ENCODE measurements at regions of chr4 and their contacts with region 1.

Region 1: GRCh38 chr4:48499551-48500066 is 9.6 kb downstream of the ZAR1 start:
- DNase-seq: no peak
- ATAC-seq: no peak
- H3K4me3 ChIP-seq: no peak overlapping the region
- H3K27ac ChIP-seq: no peak overlapping the region
- H3K4me1 ChIP-seq: no peaks in the 10 kb centered on the region
- H3K27me3 ChIP-seq: no peaks in the 10 kb centered on the region
- CTCF ChIP-seq: no peak
- POLR2A ChIP-seq: no peak
- RAD21 ChIP-seq: no peak

Region 2: DNA sequence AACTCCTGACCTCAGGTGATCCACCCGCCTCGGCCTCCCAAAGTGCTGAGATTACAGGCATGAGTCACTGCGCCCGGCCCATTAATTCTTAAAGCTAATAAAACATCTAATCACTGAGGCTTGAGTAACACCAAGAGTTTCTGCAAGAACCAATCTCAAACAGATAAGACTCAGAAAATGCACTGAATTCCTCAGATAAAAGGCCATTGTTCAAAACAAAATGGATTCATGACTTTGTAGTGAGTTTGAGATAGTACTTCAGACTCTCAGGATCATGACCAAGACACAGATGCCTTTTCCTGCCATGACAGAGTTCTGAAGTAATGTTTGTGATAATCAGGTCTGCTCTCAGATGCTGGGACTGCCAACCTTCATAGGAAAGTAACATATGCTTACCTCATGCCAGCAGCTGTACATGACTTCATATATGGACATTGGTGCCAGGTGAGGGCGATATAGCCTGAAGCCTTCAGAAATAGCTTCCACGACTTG is 428.4 kb before region 1 on chr4:
- CTCF ChIA-PET with region 1: no interaction called
- POLR2A ChIA-PET with region 1: no interaction called
- dilution Hi-C with region 1: no loop called
- in situ Hi-C with region 1: no loop called
- intact Hi-C with region 1: no loop called
- DNase-seq: no peak
- ATAC-seq: no peak
- H3K4me3 ChIP-seq: no peak overlapping the region
- H3K27ac ChIP-seq: no peak overlapping the region
- H3K4me1 ChIP-seq: no peaks in the 10 kb centered on the region
- H3K27me3 ChIP-seq: no peaks in the 10 kb centered on the region; the same call in 1 of the 2 replicates
- CTCF ChIP-seq: no peak
- POLR2A ChIP-seq: no peak
- RAD21 ChIP-seq: no peak

Region 3: GRCh38 chr4:48223633-48224295 is 275.8 kb before region 1 on chr4:
- CTCF ChIA-PET with region 1: no interaction called
- POLR2A ChIA-PET with region 1: no interaction called
- dilution Hi-C with region 1: no loop called
- in situ Hi-C with region 1: no loop called
- intact Hi-C with region 1: no loop called
- DNase-seq: peak; percentile 11
- ATAC-seq: no peak
- H3K4me3 ChIP-seq: no peak overlapping the region
- H3K27ac ChIP-seq: no peak overlapping the region
- H3K4me1 ChIP-seq: no peaks in the 10 kb centered on the region
- H3K27me3 ChIP-seq: no peaks in the 10 kb centered on the region
- CTCF ChIP-seq: no peak
- POLR2A ChIP-seq: no peak
- RAD21 ChIP-seq: no peak

Region 4: GRCh38 chr4:48450740-48451139 is 48.9 kb before region 1 on chr4:
- CTCF ChIA-PET with region 1: no interaction called
- POLR2A ChIA-PET with region 1: no interaction called
- dilution Hi-C with region 1: no loop called
- in situ Hi-C with region 1: no loop called
- intact Hi-C with region 1: loop called (anchors 10 kb)
- DNase-seq: no peak
- ATAC-seq: no peak
- H3K4me3 ChIP-seq: no peak overlapping the region
- H3K27ac ChIP-seq: no peak overlapping the region
- H3K4me1 ChIP-seq: no peaks in the 10 kb centered on the region
- H3K27me3 ChIP-seq: peaks cover 5% of the 10 kb centered on the region
- CTCF ChIP-seq: no peak
- POLR2A ChIP-seq: no peak
- RAD21 ChIP-seq: no peak

Region 5: DNA sequence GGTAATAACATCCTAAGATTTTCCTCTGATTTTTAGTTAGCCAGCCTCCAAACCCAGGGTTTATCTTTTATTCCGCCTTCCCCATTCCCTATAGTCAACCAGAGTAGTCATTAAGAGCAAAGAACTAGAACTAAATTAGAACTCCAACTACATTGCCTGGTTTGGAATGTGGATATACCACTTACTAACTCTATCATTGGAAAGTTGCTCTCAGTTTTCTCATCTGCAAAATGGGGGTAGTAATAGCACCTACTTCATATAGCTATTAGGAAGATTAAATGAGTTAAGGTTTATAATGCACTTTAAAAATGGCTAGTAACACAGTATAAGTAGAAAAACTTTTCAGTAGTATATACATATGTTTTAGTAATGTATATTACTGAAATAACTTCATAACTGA is 54.1 kb after region 1 on chr4:
- CTCF ChIA-PET with region 1: no interaction called
- POLR2A ChIA-PET with region 1: no interaction called
- dilution Hi-C with region 1: no loop called
- in situ Hi-C with region 1: no loop called
- intact Hi-C with region 1: no loop called
- DNase-seq: no peak
- ATAC-seq: no peak
- H3K4me3 ChIP-seq: no peak overlapping the region
- H3K27ac ChIP-seq: no peak overlapping the region
- H3K4me1 ChIP-seq: no peaks in the 10 kb centered on the region
- H3K27me3 ChIP-seq: no peaks in the 10 kb centered on the region
- CTCF ChIP-seq: no peak
- POLR2A ChIP-seq: no peak
- RAD21 ChIP-seq: no peak

Region 6: DNA sequence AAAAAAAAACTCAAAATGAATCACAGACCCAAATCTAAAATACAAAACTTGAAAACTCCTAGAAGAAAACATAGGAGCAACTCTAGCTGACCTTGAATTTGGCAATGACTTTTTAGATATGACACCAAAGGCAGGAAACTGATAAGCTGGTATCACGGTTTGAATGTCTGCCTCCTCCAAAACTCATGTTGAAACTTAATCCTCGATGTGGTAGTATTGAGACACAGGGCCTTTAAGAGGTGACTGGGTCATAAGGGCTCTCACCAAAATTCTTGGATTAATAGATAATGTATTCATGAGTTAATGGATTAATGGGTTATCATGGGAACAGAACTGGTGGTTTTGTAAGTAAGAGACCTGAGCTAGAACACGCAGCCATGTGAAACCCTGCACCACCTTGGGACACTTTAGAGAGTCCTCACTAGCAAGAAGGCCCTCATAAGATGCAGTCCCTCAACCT is 240.0 kb after region 1 on chr4:
- CTCF ChIA-PET with region 1: no interaction called
- POLR2A ChIA-PET with region 1: no interaction called
- dilution Hi-C with region 1: no loop called
- in situ Hi-C with region 1: no loop called
- intact Hi-C with region 1: no loop called
- DNase-seq: no peak
- ATAC-seq: no peak
- H3K4me3 ChIP-seq: no peak overlapping the region
- H3K27ac ChIP-seq: no peak overlapping the region
- H3K4me1 ChIP-seq: 0 out of 2 replicates have a peak, but pooled peaks cover 1% of the 10 kb centered on the region
- H3K27me3 ChIP-seq: no peaks in the 10 kb centered on the region
- CTCF ChIP-seq: no peak
- POLR2A ChIP-seq: no peak
- RAD21 ChIP-seq: no peak

Measured in IMR-90 (cell line).